ENCODE measurements at regions of chr12 and their contacts with region 1.

Region 1: GRCh38 chr12:46303039-46303666 is 34.3 kb upstream of the SLC38A1 start:
- DNase-seq: no peak
- ATAC-seq: no peak
- H3K4me3 ChIP-seq: no peak overlapping the region
- H3K27ac ChIP-seq: no peak overlapping the region
- H3K4me1 ChIP-seq: no peaks in the 10 kb centered on the region
- H3K27me3 ChIP-seq: no peaks in the 10 kb centered on the region

Region 2: DNA sequence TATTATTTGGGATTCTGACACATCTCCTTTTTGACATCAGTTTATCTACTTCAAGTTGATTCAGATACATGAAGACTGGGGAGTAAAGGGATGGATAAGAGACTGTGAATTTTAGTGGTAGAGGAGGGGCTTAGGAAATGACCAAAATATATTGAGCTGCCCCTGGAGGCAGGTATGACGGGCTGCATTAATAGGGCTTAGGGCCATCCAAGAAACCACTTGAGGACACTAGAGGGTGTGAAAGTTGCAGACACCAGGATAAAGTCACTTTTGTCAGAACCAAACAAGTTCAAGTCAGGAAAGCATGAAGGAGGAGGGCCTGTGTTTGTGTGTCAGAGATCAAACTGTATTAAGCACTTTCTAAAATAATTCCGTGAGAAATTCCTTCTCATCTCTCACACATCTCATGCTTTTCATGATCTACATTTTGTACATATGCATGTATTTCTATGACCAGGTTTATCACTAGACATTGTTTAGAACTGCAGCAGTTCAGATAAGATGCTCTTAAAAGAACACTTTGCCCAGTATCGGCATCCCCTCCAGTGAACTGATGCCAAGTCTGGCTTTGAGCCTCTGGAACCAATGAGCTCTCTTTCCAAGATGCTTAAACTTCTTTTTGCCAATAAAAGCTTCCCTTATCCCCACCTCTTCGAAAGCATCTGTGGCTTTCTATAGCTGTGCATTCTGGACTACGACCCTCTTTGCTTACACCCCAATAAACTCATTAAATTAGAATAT is 171.3 kb before region 1 on chr12:
- intact Hi-C with region 1: loop called in 1 of 4 experiments (anchors 10 kb)
- DNase-seq: peak in 1 of 3 donors; percentile 43
- ATAC-seq: peak in 1 of 2 donors; percentile 36
- H3K4me3 ChIP-seq: no peak overlapping the region
- H3K27ac ChIP-seq: no peak overlapping the region
- H3K4me1 ChIP-seq: peaks cover 2% of the 10 kb centered on the region
- H3K27me3 ChIP-seq: no peaks in the 10 kb centered on the region

Region 3: DNA sequence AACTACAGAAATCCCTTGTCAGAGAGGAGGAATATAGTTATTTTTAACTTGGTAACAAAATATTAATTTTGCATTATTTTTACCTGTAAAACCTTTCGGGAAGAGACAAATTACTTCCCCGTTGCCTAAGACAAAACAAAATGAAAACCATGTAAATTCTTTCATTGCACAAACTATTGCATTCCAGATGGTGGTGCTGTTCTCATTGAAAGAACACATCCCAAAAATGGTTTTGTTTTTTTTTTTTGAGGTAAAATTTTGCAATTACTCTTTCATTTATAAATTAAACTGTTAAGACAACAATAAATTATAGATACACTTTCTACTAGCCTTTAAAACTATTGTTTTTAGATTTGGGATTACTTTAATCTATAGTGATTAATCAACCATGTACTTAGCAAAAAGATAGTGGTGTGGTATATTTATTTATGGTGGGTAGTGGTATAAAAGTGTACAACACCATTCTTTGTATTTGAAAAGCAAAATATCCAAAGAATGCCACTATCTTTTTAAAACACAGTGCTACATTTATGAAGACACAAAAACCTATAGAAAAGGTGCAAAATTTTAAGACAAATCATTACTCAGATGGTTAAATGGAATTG is 149.8 kb before region 1 on chr12:
- intact Hi-C with region 1: loop called in 1 of 4 experiments (anchors 10 kb)
- DNase-seq: no peak
- ATAC-seq: no peak
- H3K4me3 ChIP-seq: no peak overlapping the region
- H3K27ac ChIP-seq: no peak overlapping the region
- H3K4me1 ChIP-seq: no peaks in the 10 kb centered on the region
- H3K27me3 ChIP-seq: no peaks in the 10 kb centered on the region

Region 4: DNA sequence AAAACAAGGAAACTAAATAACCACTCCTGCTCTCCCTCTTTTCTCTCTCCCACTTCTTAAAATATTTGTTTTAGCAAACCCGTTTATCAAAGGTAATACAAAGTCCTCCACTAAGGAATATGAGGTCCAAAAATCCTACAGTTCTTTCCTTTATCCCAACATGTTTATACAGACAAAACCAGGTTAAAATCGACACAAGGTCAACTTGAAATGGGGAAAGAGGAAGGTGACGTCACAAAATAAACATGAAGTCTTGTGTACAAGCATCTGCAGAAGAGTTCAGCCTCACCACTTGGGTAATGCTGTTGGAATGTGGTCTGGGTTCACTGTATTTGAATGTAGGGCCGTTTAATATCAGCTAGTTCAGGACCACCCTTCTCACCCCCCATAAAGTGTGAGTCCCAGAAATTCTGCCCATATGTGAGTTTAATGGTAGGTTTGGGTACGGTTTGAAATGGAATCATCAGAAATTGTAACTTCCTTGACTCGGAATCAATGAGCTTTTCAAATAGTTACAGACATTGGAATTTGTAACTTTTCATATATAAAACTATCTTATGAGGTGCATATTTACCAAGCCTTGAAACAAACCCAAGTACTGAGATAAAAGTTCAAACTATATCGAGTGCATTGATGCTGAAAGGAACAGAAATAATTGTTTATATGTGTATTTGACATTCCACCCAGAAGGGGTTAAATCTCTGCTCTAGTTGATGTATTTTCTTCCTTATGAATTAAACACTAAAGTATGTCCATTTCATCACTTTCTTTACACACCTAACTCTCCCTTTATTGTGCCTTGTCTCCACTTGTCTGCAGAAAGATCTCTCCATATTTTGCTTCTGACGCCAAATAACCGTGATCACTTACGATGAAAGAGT is 189.6 kb after region 1 on chr12:
- intact Hi-C with region 1: no loop called
- DNase-seq: no peak
- ATAC-seq: peak in 1 of 2 donors; percentile 77
- H3K4me3 ChIP-seq: no peak overlapping the region
- H3K27ac ChIP-seq: no peak overlapping the region
- H3K4me1 ChIP-seq: peaks cover 4% of the 10 kb centered on the region
- H3K27me3 ChIP-seq: no peaks in the 10 kb centered on the region

Measured in right cardiac atrium (tissue), 5 donors.